Mammary epithelial cell (primary cell): ENCODE measurements at regions of chr19 and their contacts with region 1.

Region 1: GRCh38 chr19:5115771-5116202 is 146.9 kb downstream of the KDM4B start:
- DNase-seq: no peak
- H3K4me3 ChIP-seq: no peak overlapping the region
- H3K27ac ChIP-seq: no peak overlapping the region
- H3K4me1 ChIP-seq: no peaks in the 10 kb centered on the region
- H3K27me3 ChIP-seq: no peaks in the 10 kb centered on the region
- CTCF ChIP-seq: no peak

Region 2: GRCh38 chr19:4908781-4909155 is 207.0 kb before region 1 on chr19:
- CTCF ChIA-PET with region 1: no interaction called
- dilution Hi-C with region 1: no loop called
- in situ Hi-C with region 1: no loop called
- intact Hi-C with region 1: no loop called
- DNase-seq: no peak
- H3K4me3 ChIP-seq: no peak overlapping the region
- H3K27ac ChIP-seq: no peak overlapping the region
- H3K4me1 ChIP-seq: peaks cover 35% of the 10 kb centered on the region
- H3K27me3 ChIP-seq: no peaks in the 10 kb centered on the region
- CTCF ChIP-seq: no peak

Region 3: GRCh38 chr19:5154129-5154798 is 38.5 kb after region 1 on chr19:
- CTCF ChIA-PET with region 1: no interaction called
- dilution Hi-C with region 1: loop called (anchors 5 kb)
- in situ Hi-C with region 1: no loop called
- intact Hi-C with region 1: no loop called
- DNase-seq: no peak
- H3K4me3 ChIP-seq: no peak overlapping the region
- H3K27ac ChIP-seq: no peak overlapping the region
- H3K4me1 ChIP-seq: no peaks in the 10 kb centered on the region
- H3K27me3 ChIP-seq: no peaks in the 10 kb centered on the region
- CTCF ChIP-seq: peak; percentile 34 to 58

Region 4: GRCh38 chr19:5196832-5197231 is 81.0 kb after region 1 on chr19:
- CTCF ChIA-PET with region 1: no interaction called
- dilution Hi-C with region 1: loop called (anchors 5 kb)
- in situ Hi-C with region 1: no loop called
- intact Hi-C with region 1: no loop called
- DNase-seq: no peak
- H3K4me3 ChIP-seq: no peak overlapping the region
- H3K27ac ChIP-seq: no peak overlapping the region
- H3K4me1 ChIP-seq: no peaks in the 10 kb centered on the region
- H3K27me3 ChIP-seq: no peaks in the 10 kb centered on the region
- CTCF ChIP-seq: no peak